Activated T-helper 1 cell treated with anti-CD3 and anti-CD28 coated beads, Interleukin-12 subunit alpha, Interleukin-12 subunit beta, Interleukin-2, Interleukin-4 antibody, amounts not matched to agents 30 ng/mL and 10 ng/mL and 1 ng/mL, durations not matched to agents 14 hours and 24 hours and 36 hours (primary cell): ENCODE measurements at regions of chr5 and their contacts with region 1.

Region 1: DNA sequence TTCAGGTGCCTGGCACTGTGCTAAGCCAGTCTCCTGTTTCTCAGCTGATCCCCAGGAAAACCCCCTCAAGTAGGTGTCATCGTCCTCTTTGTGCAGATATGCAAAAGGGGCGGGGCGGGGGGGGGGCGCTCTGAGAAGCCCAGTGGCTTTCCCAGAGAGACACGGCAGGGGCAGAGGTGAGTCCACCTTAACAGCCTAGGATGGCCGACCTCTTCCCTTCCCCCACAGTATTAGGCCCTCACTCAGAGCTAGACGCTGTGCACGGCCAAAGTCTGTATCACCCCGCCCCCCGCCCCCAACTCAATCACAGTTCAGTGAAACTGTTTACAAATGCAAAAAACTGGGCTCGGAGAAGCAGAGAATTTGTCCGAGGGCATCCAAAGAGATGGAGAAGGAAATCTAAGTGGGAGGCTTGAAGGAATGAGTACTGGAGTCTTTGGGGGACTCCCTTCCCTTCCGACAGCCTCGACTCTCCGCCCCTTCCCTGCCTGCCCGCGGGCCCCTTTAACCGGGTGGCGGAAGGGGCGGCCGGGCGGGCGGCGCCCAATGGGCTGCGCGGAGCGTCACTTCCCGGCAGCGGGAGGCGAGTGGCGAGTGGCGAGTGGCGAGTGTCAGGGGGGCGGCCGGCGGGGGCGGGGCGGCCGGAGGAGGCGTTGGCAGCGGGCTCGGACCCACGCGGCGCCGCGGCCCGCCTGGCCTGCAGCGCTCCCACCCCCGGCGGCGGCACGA is at the start of gene ERGIC1:
- DNase-seq: peak; percentile 79
- H3K4me3 Mint-ChIP-seq: peak within 1 kb of the TSS; percentile 88
- H3K27ac Mint-ChIP-seq: peak within 1 kb of the TSS; percentile 85
- H3K4me1 Mint-ChIP-seq: peaks cover 19% of the 10 kb centered on the region
- H3K27me3 Mint-ChIP-seq: no peaks in the 10 kb centered on the region
- total RNA-seq, gene ERGIC1: 47.4 and 47.9 TPM in 2 replicates

Region 2: GRCh38 chr5:172770675-172771438 is 63.0 kb before region 1 on chr5 and contains the start of gene DUSP1:
- intact Hi-C with region 1: loop called (anchors 1 kb)
- DNase-seq: peak; percentile 93
- H3K4me3 Mint-ChIP-seq: peak within 1 kb of the TSS; percentile 88
- H3K27ac Mint-ChIP-seq: peak within 1 kb of the TSS; percentile 98
- H3K4me1 Mint-ChIP-seq: peaks cover 61% of the 10 kb centered on the region
- H3K27me3 Mint-ChIP-seq: no peaks in the 10 kb centered on the region
- total RNA-seq, gene DUSP1: 11.9 and 12.5 TPM in 2 replicates

Region 3: GRCh38 chr5:172777881-172778814 is 55.7 kb before region 1 on chr5:
- intact Hi-C with region 1: loop called (anchors 1 kb)
- DNase-seq: no peak
- H3K4me3 Mint-ChIP-seq: peak overlapping the region; percentile 55
- H3K27ac Mint-ChIP-seq: peak overlapping the region; percentile 94
- H3K4me1 Mint-ChIP-seq: peaks cover 45% of the 10 kb centered on the region
- H3K27me3 Mint-ChIP-seq: no peaks in the 10 kb centered on the region

Region 4: DNA sequence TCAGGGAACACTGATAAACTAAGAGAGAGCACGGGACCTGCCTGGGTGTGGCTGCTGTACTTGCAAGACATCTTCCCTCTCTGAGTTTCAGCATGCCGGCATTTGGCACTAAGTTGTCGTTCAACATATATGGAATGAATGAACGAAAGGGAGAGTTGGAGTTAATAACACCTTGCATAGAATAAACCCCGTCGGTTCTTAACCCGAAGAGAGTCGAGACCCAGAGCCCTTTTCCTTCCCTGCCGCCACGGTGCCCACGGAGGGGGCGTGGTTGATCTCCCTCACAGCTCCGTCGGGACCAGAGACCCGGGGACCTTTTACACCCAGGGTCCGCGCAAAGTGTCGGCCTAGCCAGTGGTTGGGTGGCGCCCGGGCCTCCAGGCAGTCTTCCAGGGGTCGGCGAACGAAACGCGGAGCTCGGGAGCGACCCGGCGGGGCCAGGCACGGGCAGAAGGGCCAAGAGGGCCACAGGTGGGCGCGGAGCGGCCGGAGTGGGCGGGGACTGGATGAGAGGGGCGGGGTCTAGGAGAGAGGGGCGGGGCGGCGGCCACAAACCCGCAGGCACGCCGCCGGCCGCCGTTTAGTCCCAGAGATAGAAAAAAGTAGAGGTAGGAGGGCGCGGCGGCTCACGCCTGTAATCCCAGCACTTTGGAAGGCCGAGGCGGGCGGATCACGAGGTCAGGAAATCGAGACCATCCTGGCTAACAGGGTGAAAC is 124.6 kb after region 1 on chr5:
- intact Hi-C with region 1: loop called (anchors 1 kb)
- DNase-seq: peak; percentile 51
- H3K4me3 Mint-ChIP-seq: peak overlapping the region; percentile 99
- H3K27ac Mint-ChIP-seq: peak overlapping the region; percentile 98
- H3K4me1 Mint-ChIP-seq: peaks cover 27% of the 10 kb centered on the region
- H3K27me3 Mint-ChIP-seq: peaks cover 6% of the 10 kb centered on the region